CD8-positive, alpha-beta T cell (primary cell): ENCODE measurements at regions of chr4 and their contacts with region 1.

Region 1: DNA sequence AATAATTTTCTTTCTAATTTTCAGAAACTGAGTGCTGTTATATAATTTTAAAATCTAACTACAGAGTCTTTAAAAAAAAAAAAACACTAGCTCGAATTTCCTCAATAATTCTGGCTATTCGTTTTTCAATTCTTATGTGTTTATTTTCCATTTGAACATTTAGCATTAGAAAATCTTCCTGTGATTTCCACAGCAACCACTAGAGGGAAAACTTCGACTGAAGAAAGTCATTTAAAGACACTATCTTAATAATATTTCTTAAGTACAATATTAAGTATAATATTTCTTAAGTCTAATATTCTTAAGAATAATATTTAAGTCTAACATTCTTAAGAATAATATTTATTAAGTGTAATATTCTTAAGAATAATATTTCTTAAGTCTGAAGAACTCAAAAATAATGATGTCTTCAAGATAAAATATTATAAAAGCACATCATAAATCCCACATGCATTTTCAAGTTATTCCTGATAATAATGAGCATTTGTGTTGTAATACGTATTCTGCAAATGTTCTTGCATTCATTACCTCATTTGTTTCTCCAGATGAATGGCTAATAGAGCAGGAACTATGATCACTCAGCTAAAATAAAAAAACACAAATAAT is 118.4 kb upstream of the WDR17 start:
- DNase-seq: peak in 2 of 9 experiments; percentile 15 to 26
- ATAC-seq: no peak
- H3K4me3 ChIP-seq: no peak overlapping the region
- H3K4me3 Mint-ChIP-seq: no peak overlapping the region
- H3K27ac ChIP-seq: no peak overlapping the region
- H3K27ac Mint-ChIP-seq: no peak overlapping the region
- H3K4me1 ChIP-seq: no peaks in the 10 kb centered on the region
- H3K4me1 Mint-ChIP-seq: peaks cover 6% of the 10 kb centered on the region
- H3K27me3 ChIP-seq: no peaks in the 10 kb centered on the region
- H3K27me3 Mint-ChIP-seq: peaks cover 7% of the 10 kb centered on the region
- CTCF ChIP-seq: peak; percentile 69

Region 2: DNA sequence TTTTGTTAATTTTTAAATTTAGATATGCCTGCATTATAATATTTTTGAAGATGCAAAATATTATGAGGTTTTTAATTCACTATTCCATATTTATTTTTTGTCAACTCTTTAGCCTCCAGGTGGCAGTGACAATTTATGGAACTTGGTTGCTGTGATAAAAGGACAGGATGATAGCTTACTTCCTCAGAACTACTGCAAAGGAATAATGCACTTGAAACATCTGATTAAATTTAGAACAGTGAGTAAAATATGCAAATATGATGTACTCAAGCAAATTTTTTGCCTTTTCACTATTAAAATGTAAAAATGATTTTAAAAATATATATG is 203.1 kb after region 1 on chr4:
- CTCF ChIA-PET with region 1: no interaction called
- POLR2A ChIA-PET with region 1: no interaction called
- intact Hi-C with region 1: no loop called
- DNase-seq: peak in 2 of 9 experiments; percentile 4 to 19
- ATAC-seq: no peak
- H3K4me3 ChIP-seq: no peak overlapping the region
- H3K4me3 Mint-ChIP-seq: no peak overlapping the region
- H3K27ac ChIP-seq: no peak overlapping the region
- H3K27ac Mint-ChIP-seq: no peak overlapping the region
- H3K4me1 ChIP-seq: no peaks in the 10 kb centered on the region
- H3K4me1 Mint-ChIP-seq: no peaks in the 10 kb centered on the region
- H3K27me3 ChIP-seq: no peaks in the 10 kb centered on the region
- H3K27me3 Mint-ChIP-seq: no peaks in the 10 kb centered on the region
- CTCF ChIP-seq: peak; percentile 23

Region 3: GRCh38 chr4:177235026-177235425 is 1287.8 kb after region 1 on chr4:
- CTCF ChIA-PET with region 1: no interaction called
- POLR2A ChIA-PET with region 1: no interaction called
- intact Hi-C with region 1: loop called in 1 of 2 experiments (anchors 10 kb)
- DNase-seq: no peak
- ATAC-seq: no peak
- H3K4me3 ChIP-seq: no peak overlapping the region
- H3K4me3 Mint-ChIP-seq: no peak overlapping the region
- H3K27ac ChIP-seq: no peak overlapping the region
- H3K27ac Mint-ChIP-seq: no peak overlapping the region
- H3K4me1 ChIP-seq: no peaks in the 10 kb centered on the region
- H3K4me1 Mint-ChIP-seq: no peaks in the 10 kb centered on the region
- H3K27me3 ChIP-seq: no peaks in the 10 kb centered on the region
- H3K27me3 Mint-ChIP-seq: no peaks in the 10 kb centered on the region
- CTCF ChIP-seq: no peak